Activated naive CD4-positive, alpha-beta T cell treated with anti-CD3 and anti-CD28 coated beads for 36 hours (primary cell): ENCODE measurements at regions of chr7 and their contacts with region 1.

Region 1: GRCh38 chr7:106736508-106737201 is 75.7 kb upstream of the CCDC71L start:
- DNase-seq: peak; percentile 72
- H3K4me3 Mint-ChIP-seq: no peak overlapping the region
- H3K27ac Mint-ChIP-seq: peak overlapping the region; percentile 74
- H3K4me1 Mint-ChIP-seq: peaks cover 27% of the 10 kb centered on the region
- H3K27me3 Mint-ChIP-seq: no peaks in the 10 kb centered on the region

Region 2: DNA sequence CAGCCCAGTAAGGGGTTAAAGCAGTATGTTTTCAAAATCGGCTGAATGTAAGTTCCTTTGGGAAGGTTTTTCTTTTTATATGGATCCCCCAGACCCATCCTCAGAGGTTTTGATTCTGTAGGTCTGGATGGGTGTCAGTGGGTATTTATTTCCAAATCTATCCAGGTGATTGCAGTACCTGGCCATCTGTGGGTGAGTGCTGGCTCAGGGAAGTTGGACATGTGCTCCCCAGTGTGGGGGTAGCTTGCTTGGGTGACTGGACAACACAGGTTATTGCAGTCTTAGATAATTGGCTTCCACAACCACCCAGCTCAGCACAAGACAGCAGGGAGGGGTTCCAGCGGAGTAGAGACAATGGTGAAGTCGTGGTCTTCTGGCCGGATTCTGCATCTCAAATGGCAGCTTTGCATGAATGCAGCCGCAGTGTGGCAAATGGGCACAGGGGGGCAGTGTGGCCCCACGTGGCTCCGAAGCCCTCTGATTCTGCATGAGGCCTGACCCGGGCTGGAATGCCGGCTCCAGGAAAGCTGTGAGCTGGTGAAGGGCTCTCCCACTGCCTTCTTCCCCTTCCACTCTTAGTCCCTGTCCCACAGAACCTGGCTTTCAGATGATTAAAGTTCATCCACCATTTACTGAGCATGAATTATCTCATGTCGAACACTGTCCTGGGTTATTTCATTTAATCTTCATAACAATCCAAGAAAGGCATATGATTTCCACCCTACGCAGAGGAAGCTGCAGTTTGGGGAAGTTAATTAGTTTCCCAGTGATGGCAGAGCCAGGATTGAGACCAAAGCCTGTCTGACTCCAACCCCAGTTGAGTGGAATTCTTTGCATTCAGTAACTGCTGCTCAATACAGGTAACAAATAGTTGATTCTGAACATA is 560.0 kb before region 1 on chr7:
- CTCF ChIA-PET with region 1: interaction called, 38 read pairs
- intact Hi-C with region 1: loop called (anchors 1 kb)
- DNase-seq: peak; percentile 84
- H3K4me3 Mint-ChIP-seq: no peak overlapping the region
- H3K27ac Mint-ChIP-seq: peak overlapping the region; percentile 9
- H3K4me1 Mint-ChIP-seq: peaks cover 11% of the 10 kb centered on the region
- H3K27me3 Mint-ChIP-seq: peaks cover 12% of the 10 kb centered on the region

Region 3: GRCh38 chr7:106542550-106543220 is 194.0 kb before region 1 on chr7:
- CTCF ChIA-PET with region 1: interaction called, 19 read pairs
- intact Hi-C with region 1: loop called (anchors 1 kb)
- DNase-seq: peak; percentile 76
- H3K4me3 Mint-ChIP-seq: no peak overlapping the region
- H3K27ac Mint-ChIP-seq: no peak overlapping the region
- H3K4me1 Mint-ChIP-seq: peaks cover 8% of the 10 kb centered on the region
- H3K27me3 Mint-ChIP-seq: no peaks in the 10 kb centered on the region

Region 4: GRCh38 chr7:106704000-106704840 is 32.4 kb before region 1 on chr7:
- CTCF ChIA-PET with region 1: interaction called, 9 read pairs
- intact Hi-C with region 1: loop called (anchors 2 kb)
- DNase-seq: peak; percentile 53
- H3K4me3 Mint-ChIP-seq: peak overlapping the region; percentile 3
- H3K27ac Mint-ChIP-seq: peak overlapping the region; percentile 50
- H3K4me1 Mint-ChIP-seq: peaks cover 24% of the 10 kb centered on the region
- H3K27me3 Mint-ChIP-seq: no peaks in the 10 kb centered on the region

Region 5: GRCh38 chr7:106767498-106768323 is 31.1 kb after region 1 on chr7:
- CTCF ChIA-PET with region 1: interaction called, 23 read pairs
- intact Hi-C with region 1: no loop called
- DNase-seq: peak; percentile 25
- H3K4me3 Mint-ChIP-seq: peak overlapping the region; percentile 20
- H3K27ac Mint-ChIP-seq: peak overlapping the region; percentile 13
- H3K4me1 Mint-ChIP-seq: peaks cover 43% of the 10 kb centered on the region
- H3K27me3 Mint-ChIP-seq: no peaks in the 10 kb centered on the region